Naive thymus-derived CD4-positive, alpha-beta T cell (primary cell): ENCODE measurements at regions of chr14 and their contacts with region 1.

Region 1: GRCh38 chr14:22549981-22550673 is 38.9 kb downstream of the DAD1 start:
- DNase-seq: peak in 8 of 9 donors; percentile 54 to 86 (median 62)
- ATAC-seq: peak; percentile 57
- H3K4me3 ChIP-seq: peak overlapping the region; percentile 47
- H3K4me3 Mint-ChIP-seq: peak overlapping the region; percentile 79 to 92 (median 82)
- H3K27ac ChIP-seq: peak overlapping the region; percentile 96
- H3K27ac Mint-ChIP-seq: peak overlapping the region; percentile 93 to 99 (median 96)
- H3K4me1 ChIP-seq: peaks cover 97 to 98% of the 10 kb centered on the region in 2 donors
- H3K4me1 Mint-ChIP-seq: peaks cover 67 to 98% (median 96%) of the 10 kb centered on the region in 7 donors
- H3K27me3 ChIP-seq: no peaks in the 10 kb centered on the region
- H3K27me3 Mint-ChIP-seq: no peaks in the 10 kb centered on the region

Region 2: GRCh38 chr14:21852061-21852664 is 698.0 kb before region 1 on chr14:
- CTCF ChIA-PET with region 1: no interaction called
- POLR2A ChIA-PET with region 1: interaction called, 21 read pairs
- intact Hi-C with region 1: no loop called
- DNase-seq: peak; percentile 36 to 78 (median 66)
- ATAC-seq: peak; percentile 90
- H3K4me3 ChIP-seq: peak overlapping the region; percentile 45
- H3K4me3 Mint-ChIP-seq: peak overlapping the region; percentile 61 to 88 (median 81)
- H3K27ac ChIP-seq: peak overlapping the region; percentile 32
- H3K27ac Mint-ChIP-seq: peak overlapping the region; percentile 29 to 90 (median 80)
- H3K4me1 ChIP-seq: no peaks in the 10 kb centered on the region
- H3K4me1 Mint-ChIP-seq: peaks cover 4 to 17% (median 14%) of the 10 kb centered on the region in 7 donors
- H3K27me3 ChIP-seq: no peaks in the 10 kb centered on the region
- H3K27me3 Mint-ChIP-seq: peaks cover 0 to 28% (median 6%) of the 10 kb centered on the region in 5 donors

Region 3: DNA sequence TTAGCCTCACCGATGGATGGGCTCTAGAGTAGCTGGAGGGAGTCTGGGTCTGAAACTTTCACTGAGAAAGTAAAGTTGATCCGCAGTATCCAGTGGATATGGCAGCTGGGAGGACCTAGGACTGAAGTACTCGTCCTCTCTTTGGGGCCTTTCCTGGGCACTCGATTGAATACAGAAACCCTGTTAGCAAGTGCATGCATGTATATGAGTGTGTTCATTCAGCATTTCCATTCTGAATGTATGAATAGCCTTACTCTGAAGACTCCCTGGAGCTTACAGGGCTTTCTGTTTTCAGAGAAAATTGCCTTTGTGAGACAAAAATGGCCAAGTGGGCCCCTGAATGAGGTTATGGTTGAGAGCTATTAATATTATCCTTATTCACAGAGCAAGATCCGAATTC is 23.9 kb before region 1 on chr14:
- CTCF ChIA-PET with region 1: interaction called, 17 read pairs
- POLR2A ChIA-PET with region 1: interaction called, 709 read pairs
- intact Hi-C with region 1: loop called in 1 of 2 experiments (anchors 1 kb)
- DNase-seq: no peak
- ATAC-seq: no peak
- H3K4me3 ChIP-seq: peak overlapping the region; percentile 65
- H3K4me3 Mint-ChIP-seq: peak overlapping the region; percentile 79 to 92 (median 88)
- H3K27ac ChIP-seq: peak overlapping the region; percentile 90
- H3K27ac Mint-ChIP-seq: peak overlapping the region; percentile 90 to 99 (median 96)
- H3K4me1 ChIP-seq: peaks cover 81 to 91% of the 10 kb centered on the region in 2 donors
- H3K4me1 Mint-ChIP-seq: peaks cover 41 to 96% (median 90%) of the 10 kb centered on the region in 7 donors
- H3K27me3 ChIP-seq: no peaks in the 10 kb centered on the region
- H3K27me3 Mint-ChIP-seq: no peaks in the 10 kb centered on the region

Region 4: DNA sequence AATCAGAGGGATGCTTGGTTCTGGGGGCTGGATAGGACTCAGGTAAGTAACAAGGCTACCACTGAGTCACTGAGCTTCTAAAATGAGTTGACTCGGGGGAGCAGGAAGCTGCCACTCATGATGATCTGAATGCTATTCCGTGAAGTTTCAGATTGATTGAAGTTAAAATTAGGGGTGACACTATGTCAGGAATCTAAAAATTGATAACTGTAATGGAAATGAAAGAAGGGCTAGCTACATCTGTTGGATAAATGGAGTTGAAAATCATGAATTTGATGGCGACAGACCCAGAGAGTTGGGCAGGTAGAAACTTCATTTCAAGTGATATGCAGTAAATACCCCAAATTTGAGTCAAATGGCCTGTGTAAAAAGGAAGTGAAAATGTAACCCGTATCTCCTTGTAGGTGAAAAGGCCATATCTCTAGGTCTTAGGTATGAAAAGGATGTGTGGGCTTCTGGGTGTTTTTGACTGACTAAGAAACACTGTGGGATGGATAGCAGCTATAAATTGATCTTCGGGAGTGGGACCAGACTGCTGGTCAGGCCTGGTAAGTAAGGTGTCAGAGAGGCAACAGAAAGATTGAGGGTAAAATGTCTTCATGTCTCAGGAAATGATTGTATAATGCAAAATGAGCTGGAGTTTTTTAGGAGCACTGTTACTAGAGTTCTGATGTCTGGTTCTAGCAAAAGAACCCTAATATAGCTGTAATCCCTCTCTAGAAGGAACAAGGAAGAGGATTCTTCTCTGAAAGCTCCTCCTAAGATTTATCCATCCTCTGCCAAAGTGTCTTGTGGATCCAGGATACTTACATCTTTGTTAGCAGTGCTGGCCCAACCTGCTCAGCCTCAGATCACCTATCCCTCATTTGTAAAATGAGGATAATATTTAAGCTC is 18.4 kb before region 1 on chr14:
- CTCF ChIA-PET with region 1: interaction called, 17 read pairs
- POLR2A ChIA-PET with region 1: interaction called, 525 read pairs
- intact Hi-C with region 1: loop called in 1 of 2 experiments (anchors 1 kb)
- DNase-seq: peak in 2 of 9 donors; percentile 55 to 61
- ATAC-seq: peak; percentile 51
- H3K4me3 ChIP-seq: peak overlapping the region; percentile 44
- H3K4me3 Mint-ChIP-seq: peak overlapping the region; percentile 79 to 92 (median 86)
- H3K27ac ChIP-seq: peak overlapping the region; percentile 90
- H3K27ac Mint-ChIP-seq: peak overlapping the region; percentile 90 to 99 (median 94)
- H3K4me1 ChIP-seq: peaks cover 77 to 90% of the 10 kb centered on the region in 2 donors
- H3K4me1 Mint-ChIP-seq: peaks cover 56 to 98% (median 92%) of the 10 kb centered on the region in 7 donors
- H3K27me3 ChIP-seq: no peaks in the 10 kb centered on the region
- H3K27me3 Mint-ChIP-seq: no peaks in the 10 kb centered on the region

Region 5: DNA sequence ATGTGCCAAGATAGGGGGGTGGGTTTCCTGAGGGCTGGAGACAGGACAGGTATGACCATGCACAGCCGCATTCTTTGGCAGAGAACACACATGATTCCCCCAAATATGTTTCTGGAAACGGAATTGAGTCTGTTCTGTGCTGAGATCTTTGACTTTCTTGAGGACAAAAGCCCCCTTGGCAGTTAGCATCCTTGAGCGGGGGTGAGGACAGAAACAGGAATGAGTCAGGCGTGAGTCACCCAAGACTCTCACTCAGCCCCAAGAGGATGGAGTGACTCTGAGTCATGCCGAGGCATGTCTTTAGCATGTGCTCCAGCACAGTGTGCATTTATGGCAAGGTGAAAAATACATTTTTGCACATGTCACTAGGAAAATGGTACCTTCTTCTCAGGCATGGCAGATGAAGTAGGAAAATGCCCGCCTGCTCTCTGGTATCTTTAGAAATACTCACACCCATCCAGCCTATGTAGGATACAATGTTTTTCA is 13.2 kb before region 1 on chr14:
- CTCF ChIA-PET with region 1: interaction called, 26 read pairs
- POLR2A ChIA-PET with region 1: interaction called, 525 read pairs
- intact Hi-C with region 1: loop called (anchors 1 kb)
- DNase-seq: peak in 2 of 9 donors; percentile 75 to 90
- ATAC-seq: peak; percentile 88
- H3K4me3 ChIP-seq: peak overlapping the region; percentile 46
- H3K4me3 Mint-ChIP-seq: peak overlapping the region; percentile 79 to 93 (median 87)
- H3K27ac ChIP-seq: peak overlapping the region; percentile 90
- H3K27ac Mint-ChIP-seq: peak overlapping the region; percentile 92 to 99 (median 94)
- H3K4me1 ChIP-seq: peaks cover 94 to 97% of the 10 kb centered on the region in 2 donors
- H3K4me1 Mint-ChIP-seq: peaks cover 61 to 100% (median 97%) of the 10 kb centered on the region in 7 donors
- H3K27me3 ChIP-seq: no peaks in the 10 kb centered on the region
- H3K27me3 Mint-ChIP-seq: no peaks in the 10 kb centered on the region

Region 6: DNA sequence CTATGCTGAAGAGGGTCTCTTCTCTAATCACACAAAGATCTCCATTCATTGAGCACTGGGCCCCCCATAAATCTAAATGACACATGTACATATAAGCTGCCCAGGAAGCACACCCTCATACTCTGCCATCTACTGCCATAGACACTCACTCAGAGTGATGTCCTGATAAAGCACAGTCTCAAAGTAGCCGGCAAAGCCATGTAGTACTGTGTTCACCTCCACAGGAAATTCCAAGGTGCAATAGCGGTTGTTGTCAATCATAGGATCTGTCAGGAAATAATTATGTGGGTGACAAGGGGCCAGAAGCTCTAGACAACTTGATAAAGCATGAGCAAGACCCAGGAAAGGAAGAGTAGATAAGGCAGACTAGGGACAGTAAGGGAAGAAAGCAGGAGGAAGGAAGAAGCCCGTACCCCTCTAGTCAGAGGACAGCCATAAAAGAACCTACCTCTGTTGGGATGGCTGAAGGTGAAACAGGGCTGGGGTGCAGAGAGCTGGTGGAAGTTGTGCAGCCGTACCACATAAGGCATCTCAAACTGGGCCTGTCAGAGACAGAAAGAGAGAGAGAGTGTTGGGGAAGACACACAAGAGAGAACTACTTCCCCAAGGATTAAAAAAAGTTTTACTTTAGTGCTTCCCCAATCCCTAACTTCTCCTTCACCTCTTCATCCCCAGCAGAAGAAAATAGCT is 372.3 kb after region 1 on chr14:
- CTCF ChIA-PET with region 1: no interaction called
- POLR2A ChIA-PET with region 1: no interaction called
- intact Hi-C with region 1: no loop called
- DNase-seq: no peak
- ATAC-seq: no peak
- H3K4me3 ChIP-seq: no peak overlapping the region
- H3K4me3 Mint-ChIP-seq: no peak overlapping the region
- H3K27ac ChIP-seq: no peak overlapping the region
- H3K27ac Mint-ChIP-seq: peak overlapping the region in 2 of 9 donors; percentile 12 to 26
- H3K4me1 ChIP-seq: peaks cover 0 to 13% of the 10 kb centered on the region in 2 donors
- H3K4me1 Mint-ChIP-seq: peaks cover 5 to 44% (median 30%) of the 10 kb centered on the region in 7 donors
- H3K27me3 ChIP-seq: no peaks in the 10 kb centered on the region
- H3K27me3 Mint-ChIP-seq: peaks cover 0 to 4% (median 0%) of the 10 kb centered on the region in 5 donors